ENCODE measurements at regions of chr7 and their contacts with region 1.

Region 1: GRCh38 chr7:83162402-83163256 is at the start of gene PCLO:
- DNase-seq: peak; percentile 62
- ATAC-seq: peak; percentile 100
- H3K4me3 ChIP-seq: peak within 1 kb of the TSS; percentile 55 to 76
- H3K27ac ChIP-seq: peak within 1 kb of the TSS; percentile 42; the same call in 1 of the 2 replicates
- H3K4me1 ChIP-seq: no peaks in the 10 kb centered on the region
- H3K27me3 ChIP-seq: peaks cover 7% of the 10 kb centered on the region
- CTCF ChIP-seq: no peak
- total RNA-seq, gene PCLO: 1.1 TPM

Region 2: DNA sequence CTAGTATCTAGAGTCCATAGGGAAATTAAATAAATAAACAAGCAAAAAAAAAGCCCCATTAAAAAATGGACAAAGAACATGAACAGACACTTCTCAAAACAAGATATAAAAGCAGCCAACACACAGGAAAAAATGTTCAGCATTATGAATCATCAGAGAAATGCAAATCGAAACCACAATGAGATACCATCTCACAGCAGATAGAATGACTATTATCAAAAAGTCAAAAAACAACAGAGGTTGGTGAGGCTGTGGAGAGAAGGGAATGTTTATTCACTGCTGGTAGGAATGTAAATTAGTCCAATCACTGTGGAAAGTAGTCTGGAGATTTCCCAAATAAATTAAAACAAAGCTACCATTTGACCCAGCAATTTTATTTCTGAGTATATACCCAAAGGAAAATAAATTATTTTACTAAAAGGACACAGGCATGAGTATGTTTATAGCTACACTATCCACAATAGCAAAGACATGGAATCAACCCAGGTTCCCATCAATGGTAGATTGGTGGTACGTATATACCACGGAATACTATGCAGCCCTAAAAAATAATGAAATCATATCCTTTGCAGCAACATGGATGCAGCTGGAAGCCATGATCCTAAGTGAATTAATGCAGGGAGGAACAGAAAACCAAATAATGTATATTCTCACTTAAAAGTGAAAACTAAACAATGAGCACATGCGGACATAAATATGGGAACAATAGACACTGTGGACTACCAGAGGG is 1877.3 kb before region 1 on chr7:
- CTCF ChIA-PET with region 1: interaction called, 10 read pairs
- POLR2A ChIA-PET with region 1: no interaction called
- in situ Hi-C with region 1: no loop called
- intact Hi-C with region 1: no loop called
- DNase-seq: no peak
- ATAC-seq: peak; percentile 96
- H3K4me3 ChIP-seq: no peak overlapping the region
- H3K27ac ChIP-seq: peak overlapping the region; percentile 40
- H3K4me1 ChIP-seq: no peaks in the 10 kb centered on the region
- H3K27me3 ChIP-seq: no peaks in the 10 kb centered on the region
- CTCF ChIP-seq: no peak

Region 3: DNA sequence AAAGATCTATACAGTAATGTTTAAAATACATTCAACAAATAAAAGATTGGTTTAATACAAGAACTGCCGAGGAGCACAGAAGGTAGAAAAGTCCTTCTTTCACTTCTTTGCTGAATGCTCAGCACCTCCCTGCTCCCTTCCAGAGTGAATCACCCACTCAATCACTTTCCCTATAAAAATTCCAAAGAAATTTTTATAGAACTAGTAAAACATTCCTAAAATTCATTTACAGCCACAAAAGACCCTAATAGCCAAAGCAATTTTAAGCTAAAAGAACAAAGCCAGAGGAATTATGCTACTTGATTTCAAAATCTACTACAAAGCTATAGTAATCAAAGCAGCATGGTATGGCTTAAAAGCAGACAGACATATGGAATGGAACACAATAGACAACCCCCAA is 320.8 kb before region 1 on chr7:
- CTCF ChIA-PET with region 1: no interaction called
- POLR2A ChIA-PET with region 1: no interaction called
- in situ Hi-C with region 1: no loop called
- intact Hi-C with region 1: no loop called
- DNase-seq: no peak
- ATAC-seq: no peak
- H3K4me3 ChIP-seq: no peak overlapping the region
- H3K27ac ChIP-seq: no peak overlapping the region
- H3K4me1 ChIP-seq: no peaks in the 10 kb centered on the region
- H3K27me3 ChIP-seq: no peaks in the 10 kb centered on the region
- CTCF ChIP-seq: no peak

Region 4: DNA sequence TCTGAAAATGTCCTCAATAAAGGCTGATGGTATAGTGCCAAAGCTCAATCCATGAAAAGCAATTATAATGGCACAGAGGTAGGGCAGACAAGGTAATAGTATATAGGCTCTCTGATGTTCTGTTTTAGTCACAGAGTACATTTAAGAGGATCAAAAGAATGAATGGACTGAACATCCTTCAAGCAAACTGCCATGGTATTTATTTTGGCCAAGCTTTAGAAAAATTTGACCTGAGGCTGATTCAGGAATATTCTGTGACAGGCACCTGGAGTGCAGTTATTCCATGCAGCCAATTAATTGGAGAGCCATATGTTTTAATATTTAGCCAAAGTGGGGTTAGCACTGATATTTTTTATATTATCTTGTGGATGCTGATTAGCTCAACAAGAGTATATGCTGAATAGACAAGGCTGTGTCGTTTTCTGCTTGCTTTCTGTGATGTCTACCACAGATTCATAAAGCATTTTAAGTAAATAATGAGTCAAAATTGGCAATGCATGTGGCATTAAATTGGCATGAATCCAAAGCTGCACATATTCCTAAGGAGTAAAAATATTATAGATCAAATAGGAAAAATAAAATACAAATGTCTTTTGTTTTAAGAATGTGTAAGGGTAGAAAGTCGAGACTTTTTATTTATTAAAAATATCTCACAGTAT is 177.4 kb before region 1 on chr7:
- CTCF ChIA-PET with region 1: no interaction called
- POLR2A ChIA-PET with region 1: no interaction called
- in situ Hi-C with region 1: no loop called
- intact Hi-C with region 1: no loop called
- DNase-seq: no peak
- ATAC-seq: no peak
- H3K4me3 ChIP-seq: no peak overlapping the region
- H3K27ac ChIP-seq: no peak overlapping the region
- H3K4me1 ChIP-seq: no peaks in the 10 kb centered on the region
- H3K27me3 ChIP-seq: no peaks in the 10 kb centered on the region
- CTCF ChIP-seq: no peak